MCF 10A (cell line): ENCODE measurements at regions of chr10 and their contacts with region 1.

Region 1: DNA sequence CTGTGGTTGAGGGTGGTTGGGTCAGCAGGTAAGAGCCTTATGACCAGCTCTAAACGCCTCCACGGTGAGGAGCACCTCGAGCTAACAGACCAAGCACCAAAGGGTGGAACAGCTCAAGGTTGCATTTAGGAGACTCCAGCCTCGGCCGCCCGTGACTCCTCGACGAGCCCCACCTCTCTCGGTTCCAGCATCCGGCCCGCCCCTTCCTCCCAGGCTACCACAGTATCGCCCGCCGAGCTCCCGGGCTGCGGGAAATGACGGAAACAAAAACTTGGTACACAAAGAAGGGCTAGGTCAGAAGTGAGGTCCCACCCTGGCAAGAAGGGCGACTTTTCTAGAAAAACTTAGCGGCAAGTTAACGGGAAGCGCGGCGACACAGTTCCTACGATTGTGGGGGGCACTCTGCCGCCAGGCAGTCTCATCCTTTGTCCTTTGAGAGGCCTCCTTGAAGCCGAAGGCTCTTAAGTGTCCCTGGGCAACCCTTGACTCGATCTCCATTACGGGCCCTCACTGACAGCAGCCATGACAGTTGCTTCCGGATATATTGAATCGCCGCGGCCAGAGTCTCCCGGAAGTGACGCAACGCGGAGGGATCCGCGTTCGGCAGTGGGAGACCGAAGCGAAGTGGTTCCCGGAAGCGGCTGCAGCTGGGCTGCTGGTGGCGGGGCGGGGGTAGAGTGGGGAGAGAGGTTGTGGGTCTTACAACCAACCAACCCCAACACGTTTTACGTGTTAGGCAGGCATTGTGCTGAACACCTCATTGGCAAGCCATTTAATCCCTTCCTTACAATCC is 40.2 kb upstream of the ZNF518A start:
- DNase-seq: peak; percentile 89
- H3K4me3 Mint-ChIP-seq: peak overlapping the region; percentile 86
- H3K27ac Mint-ChIP-seq: peak overlapping the region; percentile 99
- H3K4me1 Mint-ChIP-seq: no peaks in the 10 kb centered on the region
- H3K27me3 Mint-ChIP-seq: peaks cover 32% of the 10 kb centered on the region
- CTCF ChIP-seq: no peak

Region 2: DNA sequence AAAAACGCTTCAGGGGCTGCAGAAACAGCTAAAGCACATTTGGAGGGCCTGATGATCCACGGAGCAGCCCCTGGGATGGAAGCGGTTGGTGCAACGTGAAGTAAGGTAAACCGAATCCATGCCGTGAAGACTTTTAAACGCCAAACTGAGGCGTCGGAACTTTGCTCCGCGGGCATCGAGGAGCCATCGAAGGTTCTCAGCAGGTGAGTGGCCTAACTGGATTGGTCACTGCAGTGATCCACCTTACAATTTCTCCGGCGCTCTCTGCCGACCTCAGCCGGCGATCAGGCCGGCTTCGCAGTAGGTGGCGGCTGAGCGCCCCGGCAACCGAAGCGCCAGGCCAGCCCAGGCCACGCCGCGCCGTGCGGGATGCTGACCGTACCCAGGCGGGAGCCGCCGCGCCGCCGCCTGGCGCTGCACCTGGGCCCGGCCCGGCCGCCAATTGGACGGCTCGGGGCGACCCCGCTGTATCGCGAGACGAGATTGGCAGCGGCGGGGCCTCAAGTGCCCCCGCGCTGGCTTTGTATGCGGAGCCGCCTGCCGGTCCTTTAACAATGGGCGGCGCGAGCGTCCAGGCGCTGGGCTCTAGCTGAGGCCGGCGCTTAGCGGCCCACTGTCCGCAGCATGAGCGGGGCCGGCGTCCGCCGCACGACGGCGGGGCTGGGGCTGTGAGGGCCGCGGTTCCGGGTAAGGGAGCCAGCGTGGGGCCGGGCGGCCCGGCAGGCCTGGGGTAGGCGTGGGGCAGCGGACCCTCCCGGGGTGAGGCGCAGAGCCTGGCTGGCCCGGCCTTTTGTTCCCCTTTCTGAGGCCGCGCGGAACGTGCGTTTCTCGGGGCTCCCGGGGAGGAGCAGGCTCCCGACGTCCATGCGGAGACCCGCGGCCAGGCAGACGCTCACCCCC is 46.6 kb before region 1 on chr10 and contains the start of gene CCNJ:
- CTCF ChIA-PET with region 1: no interaction called
- POLR2A ChIA-PET with region 1: interaction called, 15 read pairs
- intact Hi-C with region 1: loop called (anchors 2 kb)
- DNase-seq: peak; percentile 90
- H3K4me3 Mint-ChIP-seq: peak within 1 kb of the TSS; percentile 91
- H3K27ac Mint-ChIP-seq: peak within 1 kb of the TSS; percentile 94
- H3K4me1 Mint-ChIP-seq: peaks cover 26% of the 10 kb centered on the region
- H3K27me3 Mint-ChIP-seq: peaks cover 8% of the 10 kb centered on the region
- CTCF ChIP-seq: peak; percentile 6
- total RNA-seq, gene CCNJ: 9.3 and 10.8 TPM in 2 replicates

Region 3: DNA sequence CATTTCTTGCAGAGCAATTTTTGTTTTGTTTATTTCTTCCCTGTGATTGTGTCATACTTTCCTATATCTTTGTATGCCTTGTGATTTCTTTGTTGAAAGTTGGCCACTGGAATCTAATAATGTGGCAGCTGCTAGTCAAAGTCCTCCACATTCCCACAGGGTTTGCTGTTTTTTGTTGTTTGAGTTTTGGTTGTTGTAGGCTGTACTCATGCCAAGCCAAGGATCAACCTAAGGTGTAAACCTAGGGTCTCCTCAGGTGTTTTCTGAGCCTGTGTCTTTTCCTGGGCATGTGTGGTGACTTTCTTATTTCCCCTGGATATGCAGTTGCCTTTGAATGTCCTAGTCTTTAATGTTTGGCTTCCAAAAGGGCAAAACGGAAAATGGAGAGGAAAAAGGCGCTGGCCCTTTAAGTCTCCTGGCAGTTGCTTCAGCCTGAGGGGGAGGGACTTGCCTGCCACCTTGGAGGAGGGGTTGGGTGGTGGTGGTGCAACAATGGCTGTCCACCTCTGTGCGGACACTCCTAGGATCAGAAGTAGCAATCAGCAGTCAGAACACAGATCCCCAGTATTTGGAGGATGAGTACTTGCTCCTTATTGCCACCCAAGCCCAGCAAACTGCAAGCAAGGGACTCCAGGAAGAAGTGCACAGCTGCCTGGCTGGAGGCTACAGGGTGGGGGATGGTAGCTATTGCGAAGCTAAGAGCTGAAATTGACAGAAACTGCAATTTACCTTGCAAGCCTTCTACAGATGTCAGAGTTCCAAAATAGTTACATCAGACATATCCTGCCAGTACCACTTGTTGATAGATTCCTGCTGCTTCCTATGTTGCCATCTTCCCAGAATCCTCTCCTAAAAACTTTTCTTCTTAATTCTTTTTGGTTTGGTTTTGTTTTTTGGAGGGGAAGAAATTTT is 34.6 kb after region 1 on chr10:
- CTCF ChIA-PET with region 1: no interaction called
- POLR2A ChIA-PET with region 1: interaction called, 89 read pairs
- intact Hi-C with region 1: no loop called
- DNase-seq: peak; percentile 78
- H3K4me3 Mint-ChIP-seq: peak overlapping the region; percentile 70
- H3K27ac Mint-ChIP-seq: peak overlapping the region; percentile 79
- H3K4me1 Mint-ChIP-seq: peaks cover 4% of the 10 kb centered on the region
- H3K27me3 Mint-ChIP-seq: peaks cover 20% of the 10 kb centered on the region
- CTCF ChIP-seq: no peak

Region 4: GRCh38 chr10:96129387-96130325 is 39.8 kb after region 1 on chr10 and contains the start of gene ZNF518A:
- CTCF ChIA-PET with region 1: interaction called, 3 read pairs
- POLR2A ChIA-PET with region 1: interaction called, 89 read pairs
- intact Hi-C with region 1: loop called (anchors 1 kb)
- DNase-seq: peak; percentile 90
- H3K4me3 Mint-ChIP-seq: peak within 1 kb of the TSS; percentile 84
- H3K27ac Mint-ChIP-seq: peak within 1 kb of the TSS; percentile 99
- H3K4me1 Mint-ChIP-seq: peaks cover 10% of the 10 kb centered on the region
- H3K27me3 Mint-ChIP-seq: no peaks in the 10 kb centered on the region
- CTCF ChIP-seq: no peak
- total RNA-seq, gene ZNF518A: 13.3 and 14.7 TPM in 2 replicates

Region 5: GRCh38 chr10:96309628-96310320 is 219.9 kb after region 1 on chr10:
- CTCF ChIA-PET with region 1: no interaction called
- POLR2A ChIA-PET with region 1: no interaction called
- intact Hi-C with region 1: no loop called
- DNase-seq: no peak
- H3K4me3 Mint-ChIP-seq: no peak overlapping the region
- H3K27ac Mint-ChIP-seq: no peak overlapping the region
- H3K4me1 Mint-ChIP-seq: no peaks in the 10 kb centered on the region
- H3K27me3 Mint-ChIP-seq: peaks cover 10% of the 10 kb centered on the region
- CTCF ChIP-seq: no peak